PC-3 (cell line): ENCODE measurements at regions of chr11 and their contacts with region 1.

Region 1: GRCh38 chr11:65506770-65507505 is 8.1 kb downstream of the MALAT1 start:
- DNase-seq: peak; percentile 56
- ATAC-seq: peak; percentile 42
- H3K4me3 ChIP-seq: no peak overlapping the region
- H3K27ac ChIP-seq: peak overlapping the region; percentile 52
- H3K4me1 ChIP-seq: peaks cover 45% of the 10 kb centered on the region
- H3K27me3 ChIP-seq: no peaks in the 10 kb centered on the region
- CTCF ChIP-seq: no peak

Region 2: GRCh38 chr11:65329944-65330403 is 177.0 kb before region 1 on chr11:
- CTCF ChIA-PET with region 1: interaction called, 11 read pairs
- POLR2A ChIA-PET with region 1: no interaction called
- intact Hi-C with region 1: no loop called
- DNase-seq: peak; percentile 98
- ATAC-seq: peak; percentile 46
- H3K4me3 ChIP-seq: peak overlapping the region; percentile 15; the same call in 1 of the 2 replicates
- H3K27ac ChIP-seq: no peak overlapping the region
- H3K4me1 ChIP-seq: peaks cover 11% of the 10 kb centered on the region
- H3K27me3 ChIP-seq: no peaks in the 10 kb centered on the region
- CTCF ChIP-seq: peak; percentile 91

Region 3: DNA sequence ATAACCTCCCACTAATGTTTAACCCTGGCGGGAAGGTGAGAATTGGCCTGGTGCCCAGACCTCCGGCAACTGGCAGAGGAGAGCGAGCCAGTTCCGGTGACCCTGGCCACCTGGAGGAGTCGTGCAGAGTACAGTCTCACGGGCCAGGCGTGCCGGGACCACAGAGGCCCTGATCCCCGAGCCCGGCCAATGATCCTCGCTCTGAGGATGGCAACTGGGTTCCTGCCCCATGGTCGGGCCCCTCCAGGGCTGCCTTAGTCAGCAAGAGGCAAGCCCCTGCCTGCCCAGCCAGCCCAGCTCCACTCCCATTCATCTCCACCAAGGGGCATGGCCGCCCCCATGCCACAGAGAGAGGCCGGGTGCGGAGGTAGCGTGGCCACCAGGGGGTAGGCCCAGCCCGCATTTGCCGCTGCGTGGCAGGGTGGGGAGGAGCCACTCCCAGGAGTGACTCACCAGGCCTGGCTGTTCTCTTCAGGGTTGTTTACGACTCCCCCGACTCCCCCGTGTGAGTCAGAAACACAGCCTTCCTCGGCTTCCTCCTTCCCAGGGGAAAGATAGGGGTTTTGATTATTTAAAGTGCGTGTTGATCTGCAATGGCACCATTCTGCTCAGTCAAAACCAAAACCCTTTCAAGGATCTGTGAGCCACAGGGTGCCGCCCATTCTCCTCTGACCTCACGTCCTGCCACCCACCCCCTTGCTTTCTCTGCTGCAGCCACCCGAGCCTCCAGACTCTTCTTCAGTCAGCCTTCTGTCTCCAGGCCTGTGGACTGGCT is 124.7 kb before region 1 on chr11 and contains the start of gene SLC25A45:
- CTCF ChIA-PET with region 1: interaction called, 3 read pairs
- POLR2A ChIA-PET with region 1: interaction called, 12 read pairs
- intact Hi-C with region 1: no loop called
- DNase-seq: peak; percentile 99
- ATAC-seq: peak; percentile 78
- H3K4me3 ChIP-seq: peak within 1 kb of the TSS; percentile 55
- H3K27ac ChIP-seq: peak within 1 kb of the TSS; percentile 98
- H3K4me1 ChIP-seq: peaks cover 57% of the 10 kb centered on the region
- H3K27me3 ChIP-seq: no peaks in the 10 kb centered on the region
- CTCF ChIP-seq: peak; percentile 82
- total RNA-seq, gene SLC25A45: 12.7 and 13.1 TPM in 2 replicates

Region 4: DNA sequence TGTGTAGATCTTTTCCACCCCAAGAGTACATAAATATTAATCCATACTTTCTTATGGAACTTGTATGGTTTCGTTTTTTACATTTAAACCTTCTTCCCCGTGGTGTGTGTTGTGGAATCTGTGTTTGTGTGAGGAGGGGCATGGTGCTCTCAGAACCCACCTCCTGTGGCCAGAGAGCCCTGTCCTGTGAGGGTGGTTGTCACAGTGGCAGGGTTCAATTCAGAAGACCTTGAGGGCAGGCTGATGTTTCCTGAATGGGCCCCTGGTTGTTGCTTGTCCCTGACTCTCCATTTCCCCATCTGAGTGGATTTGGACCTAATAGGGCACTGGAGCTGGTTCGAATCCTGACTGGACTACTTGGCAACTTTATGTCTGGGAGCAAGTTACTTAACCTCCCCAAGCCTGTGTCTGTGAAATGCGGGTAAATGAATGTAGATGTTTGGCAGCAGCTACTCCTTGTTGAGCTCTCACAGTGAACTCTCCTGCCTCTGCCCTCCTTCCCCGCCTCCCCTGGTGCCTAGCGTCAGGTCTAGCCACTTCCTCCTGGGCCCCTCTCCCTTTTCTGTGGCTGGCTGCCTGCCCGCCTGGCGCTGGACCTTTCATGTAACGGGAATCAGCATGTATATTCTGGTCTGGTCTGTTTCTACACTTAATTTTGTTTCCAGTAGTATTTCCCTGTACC is 77.1 kb before region 1 on chr11:
- CTCF ChIA-PET with region 1: interaction called, 4 read pairs
- POLR2A ChIA-PET with region 1: interaction called, 4 read pairs
- intact Hi-C with region 1: loop called (anchors 5 kb)
- DNase-seq: peak; percentile 37
- ATAC-seq: peak; percentile 0; the same call in 1 of the 2 replicates
- H3K4me3 ChIP-seq: no peak overlapping the region
- H3K27ac ChIP-seq: 0 out of 2 replicates have a peak overlapping the region, but pooled peaks have one; percentile 2
- H3K4me1 ChIP-seq: peaks cover 22% of the 10 kb centered on the region
- H3K27me3 ChIP-seq: no peaks in the 10 kb centered on the region
- CTCF ChIP-seq: no peak

Region 5: DNA sequence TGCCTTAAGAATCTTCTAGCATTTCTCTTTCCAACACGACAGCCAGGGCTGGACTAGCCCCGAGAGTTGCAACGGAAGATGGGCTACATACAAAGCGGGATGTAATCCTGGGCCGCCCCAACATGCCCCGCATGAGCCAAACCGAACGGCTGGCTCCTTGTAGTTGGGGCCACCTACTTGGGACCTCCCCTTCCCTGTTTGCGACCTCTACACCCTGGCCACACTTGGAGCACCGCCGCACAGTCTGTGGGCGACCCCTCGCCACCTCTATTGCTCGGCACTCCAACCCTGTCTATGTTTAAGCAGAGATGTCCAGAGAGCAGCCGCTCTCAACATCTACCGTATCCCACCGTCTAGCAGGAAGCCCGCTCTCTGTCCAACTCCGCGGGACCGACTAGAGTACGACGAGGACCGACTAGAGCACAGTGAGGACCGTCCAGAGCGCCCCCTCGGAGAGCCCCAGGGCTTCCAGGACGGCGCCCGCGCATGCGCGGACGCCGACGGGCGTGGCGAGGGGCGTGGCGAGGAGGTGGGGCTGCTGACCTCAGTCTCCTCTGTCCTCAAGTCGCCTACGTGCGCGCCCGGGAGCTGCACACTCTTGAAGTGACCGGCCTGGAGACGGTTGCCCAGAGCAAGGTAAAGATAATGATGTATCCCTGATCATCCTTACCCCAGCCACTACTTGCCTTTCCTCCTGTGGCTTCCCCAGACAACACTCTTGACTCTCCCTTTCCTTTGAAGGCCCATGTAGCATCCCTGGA is 52.1 kb before region 1 on chr11:
- CTCF ChIA-PET with region 1: interaction called, 5 read pairs
- POLR2A ChIA-PET with region 1: interaction called, 14 read pairs
- intact Hi-C with region 1: no loop called
- DNase-seq: peak; percentile 93
- ATAC-seq: peak; percentile 91
- H3K4me3 ChIP-seq: peak overlapping the region; percentile 71
- H3K27ac ChIP-seq: peak overlapping the region; percentile 8; the same call in 1 of the 2 replicates
- H3K4me1 ChIP-seq: peaks cover 25% of the 10 kb centered on the region
- H3K27me3 ChIP-seq: no peaks in the 10 kb centered on the region
- CTCF ChIP-seq: peak; percentile 50

Region 6: DNA sequence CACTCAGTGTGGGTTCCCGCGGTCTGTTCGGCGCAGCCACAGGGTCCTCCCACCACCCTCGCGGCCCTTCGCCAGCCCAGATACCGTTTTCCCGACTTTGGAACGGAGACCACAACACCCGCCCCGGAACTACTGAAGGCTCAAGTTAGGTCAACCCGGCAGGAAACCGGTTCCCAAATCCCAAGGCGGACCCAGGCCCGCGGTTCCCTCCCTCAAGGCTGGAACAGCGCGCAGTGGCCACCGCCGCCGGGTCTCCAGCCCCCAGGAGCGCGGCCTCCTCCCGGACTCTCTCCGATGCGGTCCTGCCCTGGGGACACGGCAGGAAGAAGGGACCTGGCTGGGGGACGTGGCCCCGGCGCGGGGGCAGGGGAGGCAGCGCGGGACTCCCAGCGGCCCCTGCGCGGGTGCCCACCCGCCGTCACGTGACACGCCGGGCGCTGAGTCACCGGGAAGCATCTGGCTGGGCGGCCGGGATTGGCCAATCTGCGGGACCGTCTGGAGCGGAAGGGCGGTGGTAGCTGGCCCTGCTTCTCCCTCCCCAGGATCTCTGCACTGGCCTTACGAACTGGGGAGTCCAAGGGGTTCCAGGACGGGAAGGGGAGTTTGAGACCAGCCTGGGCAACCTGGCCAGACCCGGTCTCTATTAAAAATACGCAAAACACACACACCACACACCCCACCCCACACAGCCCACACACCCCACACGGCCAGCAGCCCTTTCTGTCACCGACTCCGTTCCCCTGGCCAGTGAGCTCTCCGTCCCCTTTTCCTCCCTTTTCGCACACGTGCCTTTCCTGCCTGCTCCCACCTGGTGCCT is 29.6 kb before region 1 on chr11:
- CTCF ChIA-PET with region 1: interaction called, 5 read pairs
- POLR2A ChIA-PET with region 1: interaction called, 19 read pairs
- intact Hi-C with region 1: no loop called
- DNase-seq: peak; percentile 97
- ATAC-seq: peak; percentile 81
- H3K4me3 ChIP-seq: peak overlapping the region; percentile 80
- H3K27ac ChIP-seq: peak overlapping the region; percentile 95
- H3K4me1 ChIP-seq: peaks cover 40% of the 10 kb centered on the region
- H3K27me3 ChIP-seq: no peaks in the 10 kb centered on the region
- CTCF ChIP-seq: no peak